Posterior vena cava (tissue), 2 donors: ENCODE measurements at regions of chr1 and their contacts with region 1.

Region 1: DNA sequence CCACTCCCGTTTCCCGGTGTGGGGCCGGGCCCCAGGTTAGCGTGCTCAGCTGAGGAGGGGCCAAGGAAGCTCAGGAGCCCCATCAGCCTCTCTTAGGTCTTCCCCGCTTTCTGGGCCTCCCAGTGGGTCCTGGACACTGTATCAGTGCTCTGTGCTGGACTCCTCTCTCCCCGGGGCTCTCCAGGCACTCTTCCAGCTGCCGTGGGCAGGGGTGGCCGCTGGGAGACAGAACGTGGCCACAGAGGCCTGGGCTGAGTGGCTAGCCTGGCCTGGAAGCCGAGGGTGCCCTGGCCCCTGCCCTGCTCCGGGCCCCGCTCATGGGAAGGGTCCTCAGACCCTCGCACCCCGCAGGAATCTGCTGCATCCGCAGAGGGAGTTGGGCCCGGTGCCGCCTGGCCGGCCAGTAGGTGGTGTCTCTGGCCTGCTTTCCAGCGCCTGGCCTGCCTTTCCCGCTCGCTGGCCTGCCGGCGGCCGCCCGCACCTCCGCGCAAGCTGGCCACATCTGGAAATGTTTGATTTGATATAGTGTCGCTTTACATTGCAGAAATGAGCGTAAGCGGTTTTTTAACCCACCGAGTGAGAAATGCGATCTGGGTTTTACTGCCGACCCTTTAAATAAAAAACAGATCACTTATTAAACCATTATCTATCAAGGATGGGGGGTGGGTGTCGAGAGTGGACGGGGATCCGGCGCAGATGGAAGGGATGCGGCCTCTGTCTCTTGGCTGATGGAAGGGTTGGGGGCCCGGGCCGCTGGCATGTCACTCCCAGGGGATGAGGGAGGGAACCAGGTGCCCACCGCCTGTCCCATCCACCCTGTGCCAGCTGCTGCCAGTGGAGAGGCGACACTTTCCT is 74.4 kb upstream of the TTC34 start:
- DNase-seq: no peak

Region 2: DNA sequence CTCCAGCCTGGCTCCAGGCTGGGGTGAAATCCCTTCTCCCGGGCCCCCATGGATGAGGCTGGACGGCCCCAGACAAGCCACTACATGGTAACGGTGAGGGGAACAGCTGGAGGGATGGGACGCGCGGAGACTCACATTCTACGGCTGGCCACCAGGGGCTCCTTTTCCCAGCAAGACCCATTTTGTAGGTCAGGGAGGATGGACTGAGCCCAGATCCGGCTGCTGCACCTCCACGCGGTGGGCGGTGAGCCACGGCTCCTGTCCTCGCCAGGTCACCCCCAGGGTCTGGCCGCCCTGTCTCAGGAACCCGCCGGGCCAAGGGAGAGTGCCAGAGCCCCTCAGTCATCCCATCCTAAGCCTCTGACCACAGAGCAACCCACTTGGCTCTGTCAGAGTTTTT is 70.4 kb after region 1 on chr1:
- intact Hi-C with region 1: no loop called
- DNase-seq: peak; percentile 59

Region 3: GRCh38 chr1:4416189-4416588 is 1540.3 kb after region 1 on chr1:
- intact Hi-C with region 1: loop called in 1 of 2 experiments (anchors 5 kb)
- DNase-seq: no peak